ENCODE measurements at regions of chr13 and their contacts with region 1.

Region 1: DNA sequence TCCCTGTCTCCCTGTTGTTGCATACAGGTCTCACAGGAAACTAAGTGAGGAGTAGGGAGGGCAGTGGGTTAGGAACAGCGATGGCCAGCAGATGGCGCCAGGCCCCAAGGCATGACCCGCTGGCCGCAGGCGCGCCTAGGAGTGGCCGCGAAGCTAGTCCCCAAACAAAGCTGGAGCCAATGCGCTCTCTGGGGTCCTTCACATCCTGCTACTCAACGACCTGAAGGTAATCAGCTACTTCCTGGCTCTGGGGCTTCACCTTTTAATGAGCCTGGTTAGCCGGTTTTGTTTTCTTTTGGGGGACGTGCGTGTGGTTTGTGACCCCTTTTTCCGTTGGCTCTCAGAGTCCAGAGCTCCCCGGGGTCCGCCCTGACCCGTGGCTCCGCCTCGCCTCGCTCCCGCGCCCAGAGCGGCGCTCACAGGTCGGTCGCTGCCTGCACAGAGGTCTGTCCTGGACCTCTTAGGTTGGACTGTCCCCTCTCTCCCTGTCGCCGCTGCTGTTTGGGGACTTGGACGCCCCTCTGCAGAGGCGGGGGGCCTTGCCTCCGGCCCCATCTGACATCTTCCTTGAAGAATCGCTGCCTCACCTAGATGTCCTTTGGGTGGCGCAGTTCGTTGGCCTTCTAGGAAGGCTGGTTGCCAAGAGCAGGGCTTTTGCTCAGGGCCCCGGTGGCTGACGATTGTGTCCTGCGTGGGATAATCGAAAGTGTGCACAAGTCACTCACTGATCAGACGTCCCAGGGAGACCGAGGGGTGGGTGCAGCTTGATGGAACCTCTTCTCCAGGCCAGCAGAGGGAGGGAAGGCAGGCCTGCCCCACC is 62.1 kb upstream of the GTF3A start:
- DNase-seq: peak; percentile 82 to 83 (median 82)
- ATAC-seq: peak; percentile 97
- H3K4me3 ChIP-seq: peak overlapping the region; percentile 30
- H3K27ac ChIP-seq: no peak overlapping the region
- H3K4me1 ChIP-seq: peaks cover 0 to 7% of the 10 kb centered on the region in 2 experiments; a peak in 2 of 5 replicates
- H3K27me3 ChIP-seq: peaks cover 7 to 19% of the 10 kb centered on the region in 2 experiments; a peak in 4 of 5 replicates
- CTCF ChIP-seq: peak; percentile 86 to 90 (median 90)
- EP300 ChIP-seq: no peak
- POLR2A ChIP-seq: no peak
- RAD21 ChIP-seq: peak; percentile 72 to 86

Region 2: GRCh38 chr13:26695891-26696311 is 666.4 kb before region 1 on chr13:
- CTCF ChIA-PET with region 1: no interaction called
- POLR2A ChIA-PET with region 1: no interaction called
- in situ Hi-C with region 1: no loop called
- intact Hi-C with region 1: no loop called
- DNase-seq: no peak
- ATAC-seq: no peak
- H3K4me3 ChIP-seq: no peak overlapping the region
- H3K27ac ChIP-seq: no peak overlapping the region
- H3K4me1 ChIP-seq: no peaks in the 10 kb centered on the region
- H3K27me3 ChIP-seq: no peaks in the 10 kb centered on the region; a peak in 1 of 5 replicates
- CTCF ChIP-seq: no peak
- EP300 ChIP-seq: no peak
- POLR2A ChIP-seq: no peak
- RAD21 ChIP-seq: no peak

Region 3: DNA sequence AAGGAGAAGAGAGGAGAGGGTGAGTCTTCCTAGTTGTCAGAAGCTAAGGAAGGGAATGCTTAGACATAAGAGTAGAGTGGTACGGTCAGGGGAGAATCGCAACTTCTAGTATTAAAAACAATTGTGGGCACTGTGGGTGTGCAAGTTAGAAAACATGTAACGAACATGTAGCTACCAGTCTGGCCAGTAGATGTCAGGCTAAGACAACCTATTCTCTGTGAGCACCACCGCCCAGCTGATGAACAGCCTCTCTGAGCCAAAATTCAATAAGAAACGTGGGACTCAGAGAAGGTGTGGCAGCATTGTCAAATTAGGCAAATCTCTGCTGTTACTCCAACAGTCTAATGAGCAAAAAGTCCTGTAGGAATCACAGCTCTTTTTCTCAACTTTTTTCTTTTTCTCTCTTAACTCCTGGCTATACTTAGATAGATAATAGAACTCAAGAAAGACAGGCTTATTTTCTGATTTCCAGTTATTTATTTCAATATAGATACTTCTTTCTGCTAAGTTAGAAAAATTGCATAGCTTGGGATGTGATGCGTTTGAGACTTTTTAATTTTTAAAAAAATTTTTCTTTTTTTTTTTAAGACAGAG is 376.9 kb before region 1 on chr13:
- CTCF ChIA-PET with region 1: interaction called, 37 read pairs
- POLR2A ChIA-PET with region 1: interaction called, 6 read pairs
- in situ Hi-C with region 1: loop called (anchors 5 kb)
- intact Hi-C with region 1: loop called (anchors 1 kb)
- DNase-seq: peak; percentile 53 to 81 (median 63)
- ATAC-seq: peak; percentile 68
- H3K4me3 ChIP-seq: no peak overlapping the region
- H3K27ac ChIP-seq: no peak overlapping the region
- H3K4me1 ChIP-seq: peaks cover 28 to 29% of the 10 kb centered on the region in 2 experiments
- H3K27me3 ChIP-seq: no peaks in the 10 kb centered on the region; a peak in 1 of 5 replicates
- CTCF ChIP-seq: peak; percentile 68 to 83 (median 76)
- EP300 ChIP-seq: no peak
- POLR2A ChIP-seq: no peak
- RAD21 ChIP-seq: peak; percentile 84 to 91